Activated B cell treated with CpG ODN at 0.5 μM for 24 hours (primary cell): ENCODE measurements at regions of chr6 and their contacts with region 1.

Region 1: GRCh38 chr6:7276199-7276524 is 36.8 kb downstream of the SSR1 start:
- DNase-seq: no peak
- ATAC-seq: no peak
- H3K4me3 Mint-ChIP-seq: peak overlapping the region; percentile 53
- H3K27ac Mint-ChIP-seq: peak overlapping the region; percentile 67
- H3K4me1 Mint-ChIP-seq: peaks cover 36% of the 10 kb centered on the region
- H3K27me3 Mint-ChIP-seq: no peaks in the 10 kb centered on the region
- CTCF ChIP-seq: no peak

Region 2: DNA sequence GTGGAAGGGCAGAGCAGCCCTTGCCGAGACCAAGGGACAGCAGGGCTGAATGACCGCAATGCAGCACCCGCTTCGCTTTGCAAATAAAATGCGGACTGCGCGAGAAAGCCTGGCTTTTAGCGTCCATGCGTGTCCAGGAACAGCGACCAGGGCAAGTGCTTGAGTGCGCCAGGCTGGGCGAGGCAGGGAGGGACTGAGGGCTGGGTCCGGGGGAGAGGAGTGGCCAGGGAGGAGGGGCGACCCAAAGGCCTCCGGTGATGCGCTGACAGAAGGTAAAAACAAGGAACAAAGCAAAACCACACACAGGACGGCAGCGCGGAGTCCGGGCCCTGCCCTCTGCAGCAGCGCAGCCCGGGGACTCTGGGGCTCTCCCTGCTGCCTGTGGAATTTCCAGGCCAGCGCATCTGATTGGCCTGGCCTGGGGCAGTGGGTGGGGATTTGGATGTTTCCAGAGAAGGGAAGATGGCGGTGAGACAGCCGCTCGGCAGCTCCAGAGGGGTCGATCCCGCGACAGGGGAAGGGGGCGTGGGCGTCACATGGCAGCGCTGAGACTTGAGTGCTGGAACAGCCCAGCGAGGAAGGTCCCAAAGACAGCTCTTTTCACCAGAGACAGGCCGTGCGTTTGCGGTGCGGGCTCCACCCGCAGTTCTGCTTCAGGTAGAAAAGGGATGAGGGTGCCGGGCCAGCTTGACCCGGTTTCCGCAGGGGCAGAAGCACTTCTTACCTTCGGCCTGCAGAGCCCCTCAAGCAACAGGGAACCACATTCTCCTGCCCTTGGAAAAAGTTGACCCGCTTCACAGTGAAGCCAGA is 14.9 kb before region 1 on chr6:
- CTCF ChIA-PET with region 1: interaction called, 11 read pairs
- POLR2A ChIA-PET with region 1: interaction called, 4 read pairs
- intact Hi-C with region 1: no loop called
- DNase-seq: peak; percentile 36
- ATAC-seq: peak; percentile 91
- H3K4me3 Mint-ChIP-seq: peak overlapping the region; percentile 90
- H3K27ac Mint-ChIP-seq: peak overlapping the region; percentile 12
- H3K4me1 Mint-ChIP-seq: peaks cover 34% of the 10 kb centered on the region
- H3K27me3 Mint-ChIP-seq: peaks cover 5% of the 10 kb centered on the region
- CTCF ChIP-seq: no peak

Region 3: GRCh38 chr6:7341989-7342742 is 66.0 kb after region 1 on chr6:
- CTCF ChIA-PET with region 1: interaction called, 9 read pairs
- POLR2A ChIA-PET with region 1: interaction called, 3 read pairs
- intact Hi-C with region 1: loop called (anchors 1 kb)
- DNase-seq: no peak
- ATAC-seq: no peak
- H3K4me3 Mint-ChIP-seq: no peak overlapping the region
- H3K27ac Mint-ChIP-seq: no peak overlapping the region
- H3K4me1 Mint-ChIP-seq: no peaks in the 10 kb centered on the region
- H3K27me3 Mint-ChIP-seq: peaks cover 21% of the 10 kb centered on the region
- CTCF ChIP-seq: no peak

Region 4: DNA sequence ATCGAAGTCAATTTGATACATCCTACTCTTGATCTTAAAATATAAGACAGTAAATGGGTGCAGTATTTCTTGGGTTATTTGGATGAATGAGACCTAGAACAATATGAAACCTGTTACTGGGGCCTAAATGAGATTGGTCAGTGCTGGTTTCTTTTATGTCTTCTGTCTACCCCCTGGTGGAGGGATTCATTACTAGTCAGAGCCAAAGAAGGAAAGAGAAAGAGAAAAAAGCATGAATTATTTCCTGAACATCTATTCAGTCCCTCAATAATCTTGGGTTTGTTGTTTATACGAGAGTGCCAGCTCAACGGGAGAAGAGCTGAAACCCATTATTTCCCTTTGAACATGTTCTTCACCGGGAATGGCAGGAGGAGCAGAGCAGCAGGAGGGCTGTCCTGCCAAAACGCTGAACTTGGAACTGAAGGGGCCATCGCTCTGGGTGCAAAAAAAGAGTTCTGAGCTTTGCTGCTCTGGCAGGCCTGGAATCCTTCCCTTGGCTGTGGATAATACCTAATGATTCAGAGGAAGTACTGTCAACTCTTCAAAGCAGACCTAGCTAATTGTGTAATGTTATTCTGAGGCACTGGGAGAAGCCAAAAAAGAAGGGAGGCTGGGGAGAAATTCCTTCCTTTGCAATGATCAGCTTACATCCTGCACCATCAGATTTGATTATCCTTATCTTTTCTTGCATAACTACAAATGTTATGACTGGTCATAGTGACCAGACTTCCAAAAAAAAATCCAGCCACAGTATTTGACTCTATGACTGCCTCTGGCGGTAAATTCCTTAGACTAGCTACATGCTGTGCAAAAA is 716.0 kb after region 1 on chr6:
- CTCF ChIA-PET with region 1: no interaction called
- POLR2A ChIA-PET with region 1: no interaction called
- intact Hi-C with region 1: loop called (anchors 5 kb)
- DNase-seq: no peak
- ATAC-seq: peak; percentile 45
- H3K4me3 Mint-ChIP-seq: no peak overlapping the region
- H3K27ac Mint-ChIP-seq: no peak overlapping the region
- H3K4me1 Mint-ChIP-seq: peaks cover 8% of the 10 kb centered on the region
- H3K27me3 Mint-ChIP-seq: no peaks in the 10 kb centered on the region
- CTCF ChIP-seq: no peak